Esophagus muscularis mucosa (tissue), 4 donors: ENCODE measurements at regions of chr17 and their contacts with region 1.

Region 1: DNA sequence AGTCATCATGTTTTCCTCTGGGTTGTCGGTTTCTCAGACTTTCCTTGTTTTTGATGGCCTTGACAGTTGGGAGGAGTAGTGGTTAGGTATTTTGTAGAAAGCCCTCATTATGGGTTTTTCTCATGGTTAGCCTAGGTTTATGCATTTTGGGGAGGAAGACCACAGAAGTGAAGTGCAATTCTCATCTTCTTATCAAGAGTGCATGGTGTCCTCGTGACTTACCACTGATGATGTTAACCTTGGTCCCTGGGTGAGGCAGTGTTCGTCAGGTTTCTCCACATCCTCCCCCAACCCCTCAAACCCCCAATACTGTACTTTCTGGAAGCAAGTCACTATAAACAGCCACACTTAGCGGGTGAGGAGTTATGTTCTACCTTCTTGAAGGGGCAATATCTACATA is 42.3 kb downstream of the BPTF start:
- DNase-seq: no peak
- H3K4me3 ChIP-seq: no peak overlapping the region
- H3K27ac ChIP-seq: no peak overlapping the region
- H3K4me1 ChIP-seq: peaks cover 0 to 11% (median 6%) of the 10 kb centered on the region in 4 donors
- H3K27me3 ChIP-seq: no peaks in the 10 kb centered on the region
- CTCF ChIP-seq: no peak
- EP300 ChIP-seq: no peak
- POLR2A ChIP-seq: no peak

Region 2: DNA sequence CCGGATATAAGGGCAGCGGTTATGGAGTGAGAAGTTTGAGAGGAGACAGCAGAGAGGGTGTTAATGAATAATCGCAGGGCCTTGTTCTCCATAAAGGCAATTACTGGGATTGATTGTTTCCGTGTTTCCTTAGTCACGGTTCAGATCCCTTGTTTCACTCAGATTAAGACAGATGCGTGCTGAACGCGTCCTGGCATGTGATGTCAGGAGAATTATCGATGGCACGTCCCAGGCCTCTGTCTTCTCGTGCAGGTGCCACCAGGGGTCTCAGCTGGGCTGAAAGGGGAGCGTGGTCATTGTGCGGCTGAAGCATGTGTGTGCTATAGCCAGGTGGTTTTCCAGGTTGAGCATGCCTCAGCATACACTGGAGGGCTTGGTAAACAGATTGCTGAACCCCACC is 292.3 kb before region 1 on chr17:
- intact Hi-C with region 1: no loop called
- DNase-seq: peak; percentile 90
- H3K4me3 ChIP-seq: no peak overlapping the region
- H3K27ac ChIP-seq: no peak overlapping the region
- H3K4me1 ChIP-seq: no peaks in the 10 kb centered on the region
- H3K27me3 ChIP-seq: no peaks in the 10 kb centered on the region
- CTCF ChIP-seq: no peak
- EP300 ChIP-seq: no peak
- POLR2A ChIP-seq: no peak

Region 3: GRCh38 chr17:67800495-67800928 is 67.1 kb before region 1 on chr17:
- intact Hi-C with region 1: loop called (anchors 5 kb)
- DNase-seq: peak; percentile 93
- H3K4me3 ChIP-seq: no peak overlapping the region
- H3K27ac ChIP-seq: no peak overlapping the region
- H3K4me1 ChIP-seq: no peaks in the 10 kb centered on the region
- H3K27me3 ChIP-seq: no peaks in the 10 kb centered on the region
- CTCF ChIP-seq: peak; percentile 52 to 65 (median 63)
- EP300 ChIP-seq: no peak
- POLR2A ChIP-seq: no peak

Region 4: DNA sequence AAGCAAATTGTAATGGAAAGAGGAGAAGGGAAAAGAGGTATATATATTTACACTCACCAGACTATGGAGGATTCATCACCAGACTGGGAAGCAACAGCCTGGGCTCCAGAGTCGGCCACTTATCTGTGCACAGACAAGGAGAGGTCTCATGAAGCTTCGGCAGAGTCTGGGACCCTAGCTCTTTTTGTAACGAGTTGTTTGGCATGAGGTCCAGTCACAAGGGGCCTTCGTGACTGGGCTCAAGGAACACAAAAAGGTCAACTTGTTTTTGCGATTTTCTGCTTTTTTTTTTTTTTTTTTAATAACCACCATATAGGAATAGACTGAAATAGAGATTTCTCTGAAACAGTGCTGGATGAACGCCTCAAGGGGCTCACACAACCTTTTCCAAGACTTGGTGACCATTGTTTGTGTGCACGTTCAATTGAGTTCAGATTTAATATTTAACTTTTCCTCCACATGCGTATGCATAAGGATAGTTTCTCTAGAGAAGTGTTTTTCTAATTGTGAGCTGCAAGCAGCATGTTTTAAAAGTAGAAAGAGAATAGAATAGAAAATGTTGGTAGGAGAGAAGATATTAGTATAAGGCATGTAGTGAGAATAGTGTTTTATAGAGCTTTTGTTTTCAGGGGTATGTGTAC is 16.5 kb before region 1 on chr17:
- intact Hi-C with region 1: no loop called
- DNase-seq: no peak
- H3K4me3 ChIP-seq: no peak overlapping the region
- H3K27ac ChIP-seq: no peak overlapping the region
- H3K4me1 ChIP-seq: peaks cover 26 to 35% (median 29%) of the 10 kb centered on the region in 4 donors
- H3K27me3 ChIP-seq: no peaks in the 10 kb centered on the region
- CTCF ChIP-seq: no peak
- EP300 ChIP-seq: no peak
- POLR2A ChIP-seq: no peak

Region 5: DNA sequence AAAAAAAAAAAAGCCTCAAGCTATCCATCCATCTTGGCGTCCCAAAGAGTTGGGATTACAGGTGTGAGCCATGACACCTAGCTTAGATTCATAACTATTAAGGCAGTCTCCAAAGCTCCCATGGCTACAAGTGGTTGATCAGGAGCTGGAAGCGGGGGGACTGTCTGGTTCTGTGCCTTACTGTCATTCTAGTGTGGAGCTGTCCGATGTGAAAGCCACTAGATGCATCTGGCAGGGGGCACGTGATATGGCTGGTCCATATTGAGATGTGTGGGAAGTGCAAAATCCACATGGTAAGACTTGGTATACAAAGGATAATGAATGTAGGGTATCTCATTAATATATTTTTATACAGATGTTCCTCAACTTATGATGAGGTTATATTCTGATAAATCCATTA is 206.7 kb after region 1 on chr17:
- intact Hi-C with region 1: no loop called
- DNase-seq: no peak
- H3K4me3 ChIP-seq: no peak overlapping the region
- H3K27ac ChIP-seq: no peak overlapping the region
- H3K4me1 ChIP-seq: peaks cover 0 to 8% (median 6%) of the 10 kb centered on the region in 4 donors
- H3K27me3 ChIP-seq: no peaks in the 10 kb centered on the region
- CTCF ChIP-seq: no peak
- EP300 ChIP-seq: no peak
- POLR2A ChIP-seq: no peak